PC-9 (cell line): ENCODE measurements at regions of chr19 and their contacts with region 1.

Region 1: DNA sequence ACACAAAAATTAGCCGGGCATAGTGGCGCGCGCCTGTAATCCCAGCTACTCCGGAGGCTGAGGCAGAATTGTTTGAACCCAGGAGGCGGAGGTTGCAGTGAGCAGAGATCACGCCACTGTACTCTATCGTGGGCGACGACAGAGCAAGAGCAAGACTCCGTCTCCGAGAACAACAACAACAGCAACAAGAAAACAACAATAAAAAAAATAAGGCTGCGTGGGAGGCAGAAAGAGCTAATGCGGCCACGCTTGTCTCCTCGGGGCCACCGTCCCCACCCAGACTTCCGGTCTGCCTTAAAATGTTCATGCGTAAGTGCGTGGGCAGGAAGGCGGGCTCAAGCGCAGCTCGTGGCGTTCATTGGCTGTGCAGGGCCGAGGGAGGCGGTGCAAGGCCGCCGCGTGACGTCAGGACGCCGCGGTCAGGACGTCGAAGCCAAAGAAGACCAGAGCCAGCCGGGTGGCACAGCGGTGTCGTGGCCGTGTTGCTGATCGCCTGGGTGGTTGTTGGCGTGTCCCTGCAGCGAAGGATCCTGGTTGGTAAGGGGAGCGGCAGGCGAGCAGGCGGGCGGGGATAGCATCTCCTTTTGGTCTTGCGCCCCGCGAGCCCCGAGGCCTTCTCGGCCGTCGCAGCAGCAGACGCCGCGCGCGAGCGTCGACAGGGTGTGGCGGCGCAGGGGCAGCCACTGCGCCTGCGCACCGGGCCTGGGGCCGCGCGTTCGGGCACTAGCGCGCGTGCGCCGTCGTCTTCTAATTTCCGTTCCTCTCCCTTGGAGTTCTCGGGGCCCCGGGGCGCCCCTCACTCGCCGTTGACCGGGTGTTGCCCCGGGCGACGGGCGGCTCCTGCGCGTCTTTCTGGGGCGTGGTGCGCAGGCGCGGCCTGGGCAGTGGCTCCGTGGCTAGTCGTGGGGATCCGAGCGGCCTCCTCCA is at the start of gene LENG8:
- DNase-seq: peak; percentile 94 to 98
- H3K4me3 ChIP-seq: peak within 1 kb of the TSS; percentile 96
- H3K27ac ChIP-seq: peak within 1 kb of the TSS; percentile 65
- H3K4me1 ChIP-seq: peaks cover 25% of the 10 kb centered on the region
- H3K27me3 ChIP-seq: no peaks in the 10 kb centered on the region
- CTCF ChIP-seq: no peak
- total RNA-seq, gene LENG8: 274 and 279 TPM in 2 replicates

Region 2: DNA sequence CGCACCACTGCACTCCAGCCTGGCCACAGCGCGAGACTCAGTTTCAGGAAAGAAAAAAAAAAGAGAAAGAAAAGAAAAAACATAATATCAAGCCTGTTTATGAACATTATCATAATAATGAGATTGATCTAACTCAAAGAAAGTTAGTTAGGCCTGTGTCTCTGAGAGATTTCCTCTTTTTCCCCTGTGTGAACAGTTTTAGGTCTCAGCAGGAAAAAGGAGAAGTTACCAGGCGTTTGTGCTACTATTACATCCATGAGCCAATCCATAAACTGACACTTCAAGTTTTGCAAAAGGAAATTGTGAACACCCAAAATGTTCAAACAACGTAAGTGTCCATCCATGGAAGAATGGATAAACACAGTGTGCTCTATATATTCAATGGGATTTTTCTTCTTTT is 371.7 kb before region 1 on chr19:
- CTCF ChIA-PET with region 1: no interaction called
- POLR2A ChIA-PET with region 1: interaction called, 12 read pairs
- intact Hi-C with region 1: no loop called
- DNase-seq: no peak
- H3K4me3 ChIP-seq: no peak overlapping the region
- H3K27ac ChIP-seq: no peak overlapping the region
- H3K4me1 ChIP-seq: no peaks in the 10 kb centered on the region
- H3K27me3 ChIP-seq: peaks cover 7% of the 10 kb centered on the region; the same call in 1 of the 2 replicates
- CTCF ChIP-seq: no peak

Region 3: DNA sequence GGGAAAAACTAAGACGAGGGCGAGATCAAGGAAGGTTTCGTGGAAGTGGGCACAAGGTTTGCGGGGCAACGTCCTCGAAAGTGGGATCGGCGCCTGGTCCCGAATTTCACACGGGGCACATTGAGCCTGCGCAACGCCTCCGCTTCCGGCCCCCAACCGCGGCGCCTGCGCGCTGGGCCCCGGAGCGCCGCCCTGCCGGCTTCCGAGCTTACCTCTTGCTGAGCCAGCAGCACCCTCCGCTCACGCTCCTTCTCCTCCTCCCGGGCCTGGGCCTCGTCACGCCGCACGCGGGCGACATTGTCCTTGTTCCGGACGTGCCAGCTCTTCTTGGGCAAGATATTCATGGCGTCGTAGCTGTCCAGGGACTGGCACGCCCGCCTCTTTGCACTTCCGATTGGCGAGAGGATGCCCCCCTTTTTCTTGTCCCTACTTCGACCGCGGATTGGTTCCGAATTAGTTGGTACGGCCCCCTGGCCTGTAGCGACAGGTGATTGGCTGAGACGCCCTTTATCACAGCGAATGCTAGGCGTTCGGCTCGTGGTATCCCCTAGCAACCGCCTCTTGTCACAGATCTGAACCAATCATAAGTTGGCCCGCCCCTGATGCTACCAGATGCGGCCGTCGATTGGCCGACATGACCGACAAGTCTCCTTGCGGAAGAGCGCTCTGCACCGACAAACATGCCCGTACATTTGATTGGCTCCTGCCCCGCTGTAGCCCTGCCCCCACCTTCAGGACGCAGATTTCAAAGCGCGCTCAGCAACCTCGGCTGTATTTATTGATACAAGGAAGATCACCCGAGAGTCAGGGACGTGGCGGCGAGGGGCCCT is 289.5 kb before region 1 on chr19 and contains the start of gene LENG1:
- CTCF ChIA-PET with region 1: interaction called, 18 read pairs
- POLR2A ChIA-PET with region 1: no interaction called
- intact Hi-C with region 1: no loop called
- DNase-seq: peak; percentile 100
- H3K4me3 ChIP-seq: peak within 1 kb of the TSS; percentile 82
- H3K27ac ChIP-seq: peak within 1 kb of the TSS; percentile 57
- H3K4me1 ChIP-seq: peaks cover 33% of the 10 kb centered on the region
- H3K27me3 ChIP-seq: no peaks in the 10 kb centered on the region
- CTCF ChIP-seq: peak; percentile 53; the same call in 1 of the 2 replicates
- total RNA-seq, gene LENG1: 5.0 and 6.7 TPM in 2 replicates

Region 4: GRCh38 chr19:54473021-54473891 is 24.2 kb after region 1 on chr19 and contains the start of gene CDC42EP5:
- CTCF ChIA-PET with region 1: no interaction called
- POLR2A ChIA-PET with region 1: interaction called, 10 read pairs
- intact Hi-C with region 1: no loop called
- DNase-seq: peak in 1 of 2 experiments; percentile 60
- H3K4me3 ChIP-seq: no peak within 1 kb of the TSS
- H3K27ac ChIP-seq: no peak within 1 kb of the TSS
- H3K4me1 ChIP-seq: peaks cover 18% of the 10 kb centered on the region; the same call in 1 of the 2 replicates
- H3K27me3 ChIP-seq: peaks cover 18% of the 10 kb centered on the region; the same call in 1 of the 2 replicates
- CTCF ChIP-seq: no peak
- total RNA-seq, gene CDC42EP5: 25.1 and 48.5 TPM in 2 replicates

Region 5: GRCh38 chr19:55667958-55668357 is 1218.9 kb after region 1 on chr19:
- CTCF ChIA-PET with region 1: no interaction called
- POLR2A ChIA-PET with region 1: interaction called, 11 read pairs
- intact Hi-C with region 1: no loop called
- DNase-seq: peak; percentile 83 to 85
- H3K4me3 ChIP-seq: no peak overlapping the region
- H3K27ac ChIP-seq: no peak overlapping the region
- H3K4me1 ChIP-seq: peaks cover 56% of the 10 kb centered on the region
- H3K27me3 ChIP-seq: no peaks in the 10 kb centered on the region
- CTCF ChIP-seq: no peak